ENCODE measurements at regions of chr15 and their contacts with region 1.

Region 1: GRCh38 chr15:60326824-60327654 is 70.7 kb downstream of the ANXA2 start:
- DNase-seq: peak; percentile 52
- ATAC-seq: no peak
- H3K4me3 Mint-ChIP-seq: no peak overlapping the region
- H3K27ac Mint-ChIP-seq: no peak overlapping the region
- H3K4me1 Mint-ChIP-seq: peaks cover 7% of the 10 kb centered on the region
- H3K27me3 Mint-ChIP-seq: peaks cover 76% of the 10 kb centered on the region

Region 2: GRCh38 chr15:59688841-59689625 is 638.0 kb before region 1 on chr15 and contains the start of gene BNIP2:
- CTCF ChIA-PET with region 1: interaction called, 27 read pairs
- DNase-seq: peak; percentile 100
- ATAC-seq: peak; percentile 93
- H3K4me3 Mint-ChIP-seq: peak within 1 kb of the TSS; percentile 84
- H3K27ac Mint-ChIP-seq: peak within 1 kb of the TSS; percentile 97
- H3K4me1 Mint-ChIP-seq: peaks cover 42% of the 10 kb centered on the region
- H3K27me3 Mint-ChIP-seq: no peaks in the 10 kb centered on the region
- total RNA-seq, gene BNIP2: 59.3 to 75.2 TPM

Region 3: GRCh38 chr15:59725172-59725486 is 601.9 kb before region 1 on chr15:
- CTCF ChIA-PET with region 1: interaction called, 41 read pairs
- DNase-seq: no peak
- ATAC-seq: no peak
- H3K4me3 Mint-ChIP-seq: no peak overlapping the region
- H3K27ac Mint-ChIP-seq: no peak overlapping the region
- H3K4me1 Mint-ChIP-seq: peaks cover 2% of the 10 kb centered on the region
- H3K27me3 Mint-ChIP-seq: peaks cover 23% of the 10 kb centered on the region

Region 4: GRCh38 chr15:59741274-59741906 is 585.6 kb before region 1 on chr15:
- CTCF ChIA-PET with region 1: interaction called, 18 read pairs
- DNase-seq: no peak
- ATAC-seq: no peak
- H3K4me3 Mint-ChIP-seq: no peak overlapping the region
- H3K27ac Mint-ChIP-seq: no peak overlapping the region
- H3K4me1 Mint-ChIP-seq: no peaks in the 10 kb centered on the region
- H3K27me3 Mint-ChIP-seq: peaks cover 23% of the 10 kb centered on the region

Region 5: GRCh38 chr15:59751552-59752413 is 575.3 kb before region 1 on chr15:
- CTCF ChIA-PET with region 1: interaction called, 15 read pairs
- DNase-seq: no peak
- ATAC-seq: peak; percentile 84
- H3K4me3 Mint-ChIP-seq: no peak overlapping the region
- H3K27ac Mint-ChIP-seq: no peak overlapping the region
- H3K4me1 Mint-ChIP-seq: peaks cover 10% of the 10 kb centered on the region
- H3K27me3 Mint-ChIP-seq: peaks cover 24% of the 10 kb centered on the region

Region 6: GRCh38 chr15:60115579-60116380 is 211.3 kb before region 1 on chr15:
- CTCF ChIA-PET with region 1: no interaction called
- DNase-seq: no peak
- ATAC-seq: no peak
- H3K4me3 Mint-ChIP-seq: no peak overlapping the region
- H3K27ac Mint-ChIP-seq: no peak overlapping the region
- H3K4me1 Mint-ChIP-seq: peaks cover 27% of the 10 kb centered on the region
- H3K27me3 Mint-ChIP-seq: peaks cover 8% of the 10 kb centered on the region

Measured in activated CD8-positive, alpha-beta memory T cell treated with anti-CD3 and anti-CD28 coated beads, Interleukin-2, amount 10 ng/mL, durations not matched to agents 7 days and 5 days (primary cell).